ENCODE measurements at regions of chr1 and their contacts with region 1.

Region 1: DNA sequence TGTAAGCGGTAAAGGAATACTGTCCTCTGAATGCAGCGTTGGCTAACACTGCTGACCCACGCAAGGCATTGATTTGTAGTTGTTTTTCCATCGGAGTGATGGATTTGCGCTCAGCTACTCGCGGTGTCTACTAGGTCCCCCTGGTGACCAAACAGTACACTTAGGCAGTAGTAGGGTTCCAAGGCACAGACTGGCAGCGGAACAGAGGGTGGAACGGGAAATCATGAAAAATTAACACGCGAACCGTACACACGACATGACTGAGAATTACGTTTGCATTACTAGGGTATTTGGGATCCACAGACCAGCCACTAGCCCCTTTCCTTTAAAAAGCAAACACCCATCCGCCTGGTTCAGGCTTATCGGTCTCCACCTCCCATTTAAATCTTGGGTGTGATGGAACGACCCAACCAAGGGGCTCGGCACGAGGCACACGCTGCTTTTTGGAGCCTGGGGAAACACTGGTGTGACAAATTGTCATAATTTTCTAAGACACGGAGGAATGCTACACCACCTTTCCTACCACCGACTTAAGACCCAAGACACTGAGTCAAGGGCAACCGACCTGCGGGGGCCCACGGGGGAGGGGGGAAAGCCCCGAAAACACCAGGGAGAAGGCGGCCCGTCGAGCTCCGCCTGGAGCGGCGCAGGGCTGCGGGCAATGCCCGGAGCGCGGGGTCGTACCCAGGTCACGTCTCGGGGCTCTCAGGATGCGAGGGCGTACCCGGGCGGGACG is 699 bp downstream of the DIPK1A start:
- DNase-seq: peak; percentile 82 to 86 (median 83)
- H3K4me3 ChIP-seq: peak overlapping the region; percentile 53 to 92 (median 70)
- H3K27ac ChIP-seq: peak overlapping the region in 1 of 2 experiments; percentile 86
- H3K4me1 ChIP-seq: peaks cover 0 to 19% (median 14%) of the 10 kb centered on the region in 4 experiments
- H3K27me3 ChIP-seq: peaks cover 0 to 14% (median 0%) of the 10 kb centered on the region in 5 experiments

Region 2: DNA sequence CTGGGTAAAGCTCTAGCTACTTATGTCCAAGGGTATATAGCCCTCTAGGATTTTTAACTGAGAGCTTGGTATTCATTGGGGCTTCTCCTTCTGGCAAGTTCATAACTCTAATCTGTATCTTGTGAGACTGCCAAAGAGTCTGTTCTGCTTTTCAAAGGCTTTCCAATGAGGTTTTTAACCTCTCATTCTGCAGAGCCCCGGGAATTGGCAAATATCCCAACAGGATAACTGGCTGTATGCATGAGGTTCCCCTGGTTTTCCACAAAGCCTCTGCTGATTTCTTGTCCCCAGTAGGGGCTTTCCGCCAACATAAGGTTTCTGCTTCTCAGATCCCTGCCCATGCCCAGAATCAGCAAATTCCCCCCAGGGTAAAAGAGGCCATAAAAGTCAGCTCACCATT is 87.8 kb before region 1 on chr1:
- CTCF ChIA-PET with region 1: no interaction called
- POLR2A ChIA-PET with region 1: no interaction called
- DNase-seq: no peak
- H3K4me3 ChIP-seq: no peak overlapping the region
- H3K27ac ChIP-seq: no peak overlapping the region
- H3K4me1 ChIP-seq: no peaks in the 10 kb centered on the region
- H3K27me3 ChIP-seq: no peaks in the 10 kb centered on the region

Region 3: GRCh38 chr1:92944901-92945747 is 15.4 kb before region 1 on chr1:
- CTCF ChIA-PET with region 1: interaction called, 15 read pairs
- POLR2A ChIA-PET with region 1: no interaction called
- DNase-seq: no peak
- H3K4me3 ChIP-seq: no peak overlapping the region
- H3K27ac ChIP-seq: no peak overlapping the region
- H3K4me1 ChIP-seq: peaks cover 0 to 4% (median 0%) of the 10 kb centered on the region in 4 experiments
- H3K27me3 ChIP-seq: no peaks in the 10 kb centered on the region

Region 4: GRCh38 chr1:92980732-92981647 is 20.4 kb after region 1 on chr1:
- CTCF ChIA-PET with region 1: no interaction called
- POLR2A ChIA-PET with region 1: no interaction called
- DNase-seq: no peak
- H3K4me3 ChIP-seq: no peak overlapping the region
- H3K27ac ChIP-seq: no peak overlapping the region
- H3K4me1 ChIP-seq: no peaks in the 10 kb centered on the region
- H3K27me3 ChIP-seq: no peaks in the 10 kb centered on the region

Region 5: DNA sequence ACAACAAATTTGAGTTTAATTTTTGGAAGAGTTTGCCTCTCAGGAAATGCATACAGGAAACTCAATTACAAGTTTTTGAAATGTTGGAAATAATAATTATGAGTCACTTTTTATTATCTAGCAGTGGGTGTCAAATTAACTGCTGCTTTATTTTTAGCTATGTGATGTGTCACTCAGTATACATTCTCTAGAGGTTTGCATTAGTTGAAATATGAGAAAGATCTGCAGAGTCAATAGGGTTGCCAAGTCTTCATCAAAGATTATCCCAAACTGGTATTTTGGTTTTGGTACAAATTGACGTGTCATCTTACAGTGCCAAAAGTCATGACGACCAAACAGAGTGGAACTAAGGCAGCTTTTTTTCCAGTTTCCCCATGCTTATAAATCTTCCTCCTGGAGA is 55.0 kb after region 1 on chr1:
- CTCF ChIA-PET with region 1: no interaction called
- POLR2A ChIA-PET with region 1: no interaction called
- DNase-seq: no peak
- H3K4me3 ChIP-seq: no peak overlapping the region
- H3K27ac ChIP-seq: no peak overlapping the region
- H3K4me1 ChIP-seq: no peaks in the 10 kb centered on the region
- H3K27me3 ChIP-seq: no peaks in the 10 kb centered on the region

Region 6: DNA sequence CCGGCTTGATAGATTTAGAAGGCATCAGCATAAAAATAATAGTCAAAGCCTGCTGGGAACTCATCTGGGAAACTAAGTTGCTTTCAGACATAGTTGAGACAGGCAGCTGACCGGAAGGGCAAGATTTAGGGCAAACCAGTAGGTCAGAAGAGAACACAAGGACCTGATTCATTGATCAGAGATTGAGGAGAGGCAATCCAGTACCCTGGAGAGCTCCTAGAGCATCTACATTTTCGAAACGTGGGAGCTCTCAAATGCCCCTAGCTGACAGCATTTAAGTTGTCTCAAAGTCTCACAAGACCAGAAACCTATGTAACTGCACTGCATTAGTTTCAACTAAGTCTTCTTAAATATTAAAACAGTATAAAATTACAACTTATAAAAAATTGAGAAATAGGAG is 95.7 kb after region 1 on chr1:
- CTCF ChIA-PET with region 1: no interaction called
- POLR2A ChIA-PET with region 1: no interaction called
- DNase-seq: peak; percentile 29 to 61 (median 55)
- H3K4me3 ChIP-seq: no peak overlapping the region
- H3K27ac ChIP-seq: no peak overlapping the region
- H3K4me1 ChIP-seq: no peaks in the 10 kb centered on the region
- H3K27me3 ChIP-seq: no peaks in the 10 kb centered on the region

Measured in common myeloid progenitor, CD34-positive (primary cell).